Naive thymus-derived CD4-positive, alpha-beta T cell (primary cell): ENCODE measurements at regions of chr3 and their contacts with region 1.

Region 1: DNA sequence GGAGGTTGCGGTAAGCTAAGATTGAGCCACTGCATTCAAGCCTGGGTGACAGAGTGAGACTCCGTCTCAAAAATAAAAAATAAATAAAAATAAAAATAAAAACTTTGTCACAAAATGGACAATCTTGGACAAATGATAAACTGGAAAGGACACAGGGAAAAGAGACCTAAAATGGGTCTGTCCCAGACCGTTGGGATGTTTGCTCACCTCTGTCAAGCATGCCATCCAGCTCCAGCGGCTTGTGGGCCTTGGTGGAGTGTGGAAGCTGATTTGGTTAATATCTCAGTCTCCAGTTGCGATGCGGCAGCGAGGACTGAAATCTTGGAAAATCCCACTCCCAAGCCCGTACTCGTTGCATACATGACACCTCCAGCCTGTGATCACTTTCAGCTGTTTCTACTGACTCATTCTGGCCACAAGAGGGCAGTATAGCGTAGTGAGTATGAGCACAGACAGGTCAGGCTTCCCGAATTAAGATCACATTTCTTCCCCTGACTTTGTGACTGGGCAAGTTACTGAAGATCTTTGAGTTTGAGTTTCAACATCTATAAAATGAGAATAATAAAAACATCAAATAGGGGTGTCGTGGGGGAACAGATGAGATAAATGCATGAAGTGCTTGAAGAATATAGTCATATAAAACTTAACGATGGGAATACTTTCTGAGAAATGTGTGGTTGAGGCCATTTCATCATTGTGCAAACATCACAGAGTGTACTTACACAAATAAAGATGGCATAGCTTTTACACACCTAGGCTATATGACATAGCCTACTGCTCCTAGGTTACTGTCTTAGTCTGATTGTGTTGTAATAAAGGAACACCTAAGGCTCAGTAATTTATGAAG is 19.6 kb upstream of the MOBP start:
- DNase-seq: peak in 8 of 9 donors; percentile 37 to 65 (median 54)
- ATAC-seq: peak; percentile 87
- H3K4me3 ChIP-seq: no peak overlapping the region
- H3K4me3 Mint-ChIP-seq: peak overlapping the region in 1 of 10 donors; percentile 29
- H3K27ac ChIP-seq: no peak overlapping the region
- H3K27ac Mint-ChIP-seq: no peak overlapping the region
- H3K4me1 ChIP-seq: no peaks in the 10 kb centered on the region
- H3K4me1 Mint-ChIP-seq: peaks cover 0 to 5% (median 0%) of the 10 kb centered on the region in 7 donors
- H3K27me3 ChIP-seq: no peaks in the 10 kb centered on the region
- H3K27me3 Mint-ChIP-seq: peaks cover 0 to 21% (median 5%) of the 10 kb centered on the region in 5 donors

Region 2: DNA sequence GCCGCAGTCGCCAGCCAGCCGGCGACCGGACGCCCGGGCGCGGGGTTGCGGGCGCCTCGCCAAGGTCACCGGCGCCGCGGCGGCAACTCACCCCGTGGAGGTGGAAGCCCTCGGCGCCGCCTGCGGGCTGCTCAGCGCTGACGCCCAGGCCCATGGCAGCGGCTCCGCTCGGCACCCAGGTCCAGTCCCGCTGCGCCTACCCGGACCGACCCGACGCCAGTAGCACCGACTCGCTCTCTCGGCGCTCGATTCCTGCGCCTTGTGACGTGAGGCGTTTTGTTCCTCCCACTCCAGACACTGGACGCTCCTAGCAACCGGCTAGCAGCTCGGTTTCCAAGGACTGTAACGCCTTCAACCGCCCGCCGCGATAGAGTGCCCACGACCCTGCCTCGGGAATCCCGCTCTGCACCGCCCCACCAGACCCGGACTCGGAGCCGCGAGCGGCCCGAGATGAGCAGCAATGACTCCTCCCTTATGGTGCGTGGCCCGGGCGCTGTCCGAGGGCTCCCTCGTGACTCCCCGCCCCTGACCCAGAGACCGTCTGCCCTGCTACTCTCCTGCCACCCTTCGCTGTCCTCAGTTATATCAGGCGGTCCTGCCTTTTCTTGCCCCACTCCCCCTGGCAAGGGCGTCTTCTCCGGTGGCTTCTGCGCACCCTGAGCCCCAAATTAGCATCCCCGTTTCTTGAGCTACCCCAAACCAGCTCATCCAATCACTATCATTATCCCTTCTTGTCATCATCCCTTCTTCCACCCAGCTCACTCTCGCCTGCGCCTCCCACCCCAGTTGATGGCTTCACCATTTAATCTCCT is 340.3 kb before region 1 on chr3 and contains the starts of genes GORASP1 and TTC21A:
- CTCF ChIA-PET with region 1: no interaction called
- POLR2A ChIA-PET with region 1: no interaction called
- intact Hi-C with region 1: no loop called
- DNase-seq: peak; percentile 33 to 79 (median 53)
- ATAC-seq: peak; percentile 74
- H3K4me3 ChIP-seq: peak within 1 kb of the TSS; percentile 95
- H3K4me3 Mint-ChIP-seq: peak within 1 kb of the TSS; percentile 88 to 100 (median 96)
- H3K27ac ChIP-seq: peak within 1 kb of the TSS; percentile 78
- H3K27ac Mint-ChIP-seq: peak within 1 kb of the TSS; percentile 84 to 96 (median 92)
- H3K4me1 ChIP-seq: peaks cover 18 to 22% of the 10 kb centered on the region in 2 donors
- H3K4me1 Mint-ChIP-seq: peaks cover 45 to 62% (median 52%) of the 10 kb centered on the region in 7 donors
- H3K27me3 ChIP-seq: no peaks in the 10 kb centered on the region
- H3K27me3 Mint-ChIP-seq: peaks cover 0 to 5% (median 0%) of the 10 kb centered on the region in 5 donors
- total RNA-seq, gene GORASP1: 28.2 to 58.5 (median 44.6) TPM
- total RNA-seq, gene TTC21A: 2.8 to 9.7 (median 5.3) TPM

Region 3: GRCh38 chr3:39497753-39498152 is 49.9 kb after region 1 on chr3:
- CTCF ChIA-PET with region 1: interaction called, 3 read pairs
- POLR2A ChIA-PET with region 1: no interaction called
- intact Hi-C with region 1: loop called (anchors 1 kb)
- DNase-seq: no peak
- ATAC-seq: no peak
- H3K4me3 ChIP-seq: no peak overlapping the region
- H3K4me3 Mint-ChIP-seq: no peak overlapping the region
- H3K27ac ChIP-seq: no peak overlapping the region
- H3K27ac Mint-ChIP-seq: no peak overlapping the region
- H3K4me1 ChIP-seq: peaks cover 0 to 4% of the 10 kb centered on the region in 2 donors
- H3K4me1 Mint-ChIP-seq: peaks cover 2 to 12% (median 5%) of the 10 kb centered on the region in 7 donors
- H3K27me3 ChIP-seq: peaks cover 0 to 2% of the 10 kb centered on the region in 2 donors
- H3K27me3 Mint-ChIP-seq: peaks cover 26 to 46% (median 36%) of the 10 kb centered on the region in 5 donors

Region 4: DNA sequence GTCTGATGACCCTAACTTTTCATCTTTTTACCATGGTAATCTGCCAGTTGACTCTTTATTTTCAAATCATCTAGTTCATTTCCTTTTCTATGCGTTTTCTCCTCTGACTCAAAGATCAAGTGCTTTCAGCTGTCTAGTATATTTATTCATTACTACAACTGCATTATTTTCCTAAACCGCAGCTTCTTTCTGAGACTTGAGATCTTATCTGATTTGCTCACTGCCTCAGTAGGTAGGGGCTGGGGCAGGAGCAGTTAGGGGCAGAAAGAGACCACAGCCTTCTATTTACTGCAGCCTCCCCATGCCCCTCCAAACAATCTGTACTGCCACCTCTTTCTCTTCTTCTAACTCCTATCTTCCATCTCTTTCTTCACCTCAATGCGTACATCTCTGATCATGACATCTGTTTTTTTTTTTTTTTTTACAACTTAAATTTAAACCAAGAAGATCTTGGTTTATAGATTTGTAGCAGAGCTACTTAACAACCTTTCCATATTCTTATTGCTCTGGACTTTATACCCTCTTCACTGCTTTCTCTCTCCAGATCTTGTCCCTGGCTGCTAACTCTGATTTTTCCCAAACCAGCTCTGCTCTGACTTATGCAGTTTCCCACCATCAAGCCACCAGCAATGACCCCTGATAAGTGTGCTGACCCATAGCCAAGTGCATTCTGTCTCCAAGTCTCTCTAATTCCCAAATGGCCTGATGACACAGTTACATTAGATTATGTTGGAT is 71.9 kb after region 1 on chr3:
- CTCF ChIA-PET with region 1: no interaction called
- POLR2A ChIA-PET with region 1: no interaction called
- intact Hi-C with region 1: loop called in 1 of 2 experiments (anchors 2 kb)
- DNase-seq: no peak
- ATAC-seq: no peak
- H3K4me3 ChIP-seq: no peak overlapping the region
- H3K4me3 Mint-ChIP-seq: no peak overlapping the region
- H3K27ac ChIP-seq: no peak overlapping the region
- H3K27ac Mint-ChIP-seq: no peak overlapping the region
- H3K4me1 ChIP-seq: no peaks in the 10 kb centered on the region
- H3K4me1 Mint-ChIP-seq: peaks cover 0 to 5% (median 0%) of the 10 kb centered on the region in 7 donors
- H3K27me3 ChIP-seq: no peaks in the 10 kb centered on the region
- H3K27me3 Mint-ChIP-seq: peaks cover 0 to 35% (median 28%) of the 10 kb centered on the region in 5 donors

Region 5: GRCh38 chr3:39990532-39990931 is 542.7 kb after region 1 on chr3:
- CTCF ChIA-PET with region 1: no interaction called
- POLR2A ChIA-PET with region 1: no interaction called
- intact Hi-C with region 1: loop called in 1 of 2 experiments (anchors 10 kb)
- DNase-seq: no peak
- ATAC-seq: no peak
- H3K4me3 ChIP-seq: no peak overlapping the region
- H3K4me3 Mint-ChIP-seq: no peak overlapping the region
- H3K27ac ChIP-seq: no peak overlapping the region
- H3K27ac Mint-ChIP-seq: no peak overlapping the region
- H3K4me1 ChIP-seq: no peaks in the 10 kb centered on the region
- H3K4me1 Mint-ChIP-seq: no peaks in the 10 kb centered on the region
- H3K27me3 ChIP-seq: no peaks in the 10 kb centered on the region
- H3K27me3 Mint-ChIP-seq: peaks cover 2 to 22% (median 16%) of the 10 kb centered on the region in 5 donors

Region 6: DNA sequence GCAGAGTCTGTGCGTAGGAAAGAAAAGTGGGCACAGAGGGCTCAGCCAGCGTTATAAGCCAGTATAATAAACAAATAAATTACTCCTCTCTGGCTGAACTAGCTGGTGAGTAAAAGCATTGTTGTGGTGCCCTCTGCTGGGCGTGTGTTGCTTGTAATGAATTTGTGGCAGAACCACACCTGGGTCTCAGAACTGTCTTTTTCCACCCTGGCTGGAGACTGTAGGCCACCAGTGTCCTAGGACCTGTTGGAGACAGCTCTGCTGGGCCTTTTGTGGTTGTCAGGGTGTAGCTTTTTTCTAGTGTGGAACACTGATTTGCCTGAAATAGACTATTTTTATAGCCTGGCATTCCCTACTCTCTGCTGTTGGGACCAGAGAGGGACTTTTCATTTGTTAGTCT is 731.2 kb after region 1 on chr3:
- CTCF ChIA-PET with region 1: no interaction called
- POLR2A ChIA-PET with region 1: no interaction called
- intact Hi-C with region 1: loop called in 1 of 2 experiments (anchors 2 kb)
- DNase-seq: peak in 8 of 9 donors; percentile 19 to 45 (median 26)
- ATAC-seq: peak; percentile 47
- H3K4me3 ChIP-seq: no peak overlapping the region
- H3K4me3 Mint-ChIP-seq: no peak overlapping the region
- H3K27ac ChIP-seq: no peak overlapping the region
- H3K27ac Mint-ChIP-seq: no peak overlapping the region
- H3K4me1 ChIP-seq: no peaks in the 10 kb centered on the region
- H3K4me1 Mint-ChIP-seq: no peaks in the 10 kb centered on the region
- H3K27me3 ChIP-seq: no peaks in the 10 kb centered on the region
- H3K27me3 Mint-ChIP-seq: no peaks in the 10 kb centered on the region